T-cell (primary cell): ENCODE measurements at regions of chr10 and their contacts with region 1.

Region 1: GRCh38 chr10:100433253-100434240 is 29.3 kb upstream of the WNT8B start:
- DNase-seq: peak; percentile 75 to 98 (median 92)
- ATAC-seq: peak; percentile 96 to 99 (median 97)
- H3K4me3 ChIP-seq: no peak overlapping the region
- H3K4me3 Mint-ChIP-seq: no peak overlapping the region
- H3K27ac ChIP-seq: no peak overlapping the region
- H3K27ac Mint-ChIP-seq: no peak overlapping the region
- H3K4me1 ChIP-seq: no peaks in the 10 kb centered on the region
- H3K4me1 Mint-ChIP-seq: no peaks in the 10 kb centered on the region
- H3K27me3 ChIP-seq: no peaks in the 10 kb centered on the region
- H3K27me3 Mint-ChIP-seq: peaks cover 0 to 4% of the 10 kb centered on the region in 2 donors

Region 2: DNA sequence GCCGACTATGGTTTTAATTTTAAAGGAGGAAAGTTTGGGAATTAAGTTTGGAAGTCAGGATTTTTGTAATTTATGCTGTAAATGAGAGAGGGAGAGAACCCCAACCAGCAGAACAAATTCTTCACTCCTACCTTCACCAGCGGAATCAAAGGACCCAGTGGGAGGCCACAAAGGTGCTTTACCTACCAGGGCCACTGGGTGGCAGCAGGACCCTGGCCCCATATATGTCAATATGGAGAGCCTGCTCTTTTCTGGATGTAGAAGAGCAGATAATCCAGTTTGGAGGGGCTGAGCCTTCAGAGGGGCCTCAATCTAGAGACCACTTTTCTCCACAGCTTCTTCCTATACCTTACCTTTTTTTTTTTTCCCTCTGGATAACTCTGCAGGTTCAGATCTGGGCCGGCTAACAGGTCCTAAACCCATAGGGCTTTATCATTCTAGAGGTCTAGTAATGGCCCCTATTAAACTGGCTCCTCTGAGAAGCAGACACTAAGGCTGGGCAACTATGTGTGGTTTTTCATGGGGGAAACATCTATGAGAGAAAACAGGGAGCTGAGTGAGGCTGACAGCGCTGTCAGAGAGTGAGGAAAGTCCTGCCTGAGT is 95.0 kb before region 1 on chr10:
- CTCF ChIA-PET with region 1: interaction called, 9 to 10 read pairs
- POLR2A ChIA-PET with region 1: no interaction called
- DNase-seq: peak; percentile 53 to 87 (median 73)
- ATAC-seq: peak; percentile 81 to 90 (median 86)
- H3K4me3 ChIP-seq: no peak overlapping the region
- H3K4me3 Mint-ChIP-seq: no peak overlapping the region
- H3K27ac ChIP-seq: no peak overlapping the region
- H3K27ac Mint-ChIP-seq: no peak overlapping the region
- H3K4me1 ChIP-seq: no peaks in the 10 kb centered on the region
- H3K4me1 Mint-ChIP-seq: peaks cover 0 to 4% (median 4%) of the 10 kb centered on the region in 3 donors
- H3K27me3 ChIP-seq: peaks cover 0 to 4% of the 10 kb centered on the region in 2 experiments
- H3K27me3 Mint-ChIP-seq: peaks cover 3 to 7% of the 10 kb centered on the region in 2 donors

Region 3: GRCh38 chr10:100353770-100354485 is 79.6 kb before region 1 on chr10:
- CTCF ChIA-PET with region 1: interaction called in 1 of 2 experiments, 8 read pairs
- POLR2A ChIA-PET with region 1: interaction called in 1 of 2 experiments, 10 read pairs
- DNase-seq: no peak
- ATAC-seq: no peak
- H3K4me3 ChIP-seq: no peak overlapping the region
- H3K4me3 Mint-ChIP-seq: no peak overlapping the region
- H3K27ac ChIP-seq: no peak overlapping the region
- H3K27ac Mint-ChIP-seq: no peak overlapping the region
- H3K4me1 ChIP-seq: peaks cover 1 to 4% of the 10 kb centered on the region in 2 experiments
- H3K4me1 Mint-ChIP-seq: peaks cover 3 to 10% (median 3%) of the 10 kb centered on the region in 3 donors
- H3K27me3 ChIP-seq: no peaks in the 10 kb centered on the region
- H3K27me3 Mint-ChIP-seq: no peaks in the 10 kb centered on the region

Region 4: DNA sequence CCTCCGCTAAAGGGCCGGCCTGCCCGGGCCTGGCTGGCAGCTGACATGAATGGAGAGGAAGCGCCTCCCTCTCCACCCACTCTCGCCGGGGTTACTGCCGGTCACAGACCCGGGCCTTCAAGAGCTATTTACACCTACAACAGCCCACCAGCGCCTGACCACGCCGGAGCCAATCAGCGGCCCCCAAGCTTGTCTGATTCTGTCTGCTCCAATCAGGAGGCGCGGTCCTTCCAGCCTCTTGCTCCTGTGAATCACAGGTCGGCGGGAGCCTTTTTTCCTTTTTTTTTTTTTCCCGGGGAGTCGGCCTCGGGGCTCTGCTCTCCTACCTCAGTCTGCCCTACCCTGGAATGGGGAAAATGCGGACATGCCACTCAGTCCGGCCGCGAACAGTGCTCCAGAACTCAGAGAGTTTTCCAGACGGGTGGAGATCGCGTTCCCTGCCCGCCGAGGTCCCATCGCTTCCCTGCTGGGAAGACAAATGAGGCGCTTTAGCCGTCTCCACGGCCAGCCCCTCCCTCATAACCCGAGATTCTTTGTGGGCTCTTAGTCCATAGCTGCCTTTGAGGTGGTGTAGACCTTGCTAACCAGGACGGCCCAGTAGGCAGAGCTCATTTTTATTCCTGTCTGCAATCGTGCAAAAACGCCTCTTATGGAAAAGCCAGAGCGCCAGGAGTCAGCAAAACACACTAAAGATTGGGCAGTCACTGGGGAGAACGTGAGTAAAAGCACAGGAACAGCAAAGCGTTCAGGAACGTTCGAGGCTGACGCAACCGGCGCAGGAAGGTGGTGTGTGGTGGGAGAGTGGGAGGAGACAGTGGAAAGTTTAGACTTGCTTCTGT is 60.0 kb before region 1 on chr10:
- CTCF ChIA-PET with region 1: interaction called in 1 of 2 experiments, 10 read pairs
- POLR2A ChIA-PET with region 1: no interaction called
- DNase-seq: peak; percentile 54 to 91 (median 78)
- ATAC-seq: peak; percentile 81 to 86 (median 84)
- H3K4me3 ChIP-seq: peak overlapping the region; percentile 67 to 80
- H3K4me3 Mint-ChIP-seq: no peak overlapping the region
- H3K27ac ChIP-seq: peak overlapping the region; percentile 92
- H3K27ac Mint-ChIP-seq: no peak overlapping the region
- H3K4me1 ChIP-seq: peaks cover 34 to 52% of the 10 kb centered on the region in 2 experiments
- H3K4me1 Mint-ChIP-seq: peaks cover 19 to 21% (median 20%) of the 10 kb centered on the region in 3 donors
- H3K27me3 ChIP-seq: no peaks in the 10 kb centered on the region
- H3K27me3 Mint-ChIP-seq: no peaks in the 10 kb centered on the region

Region 5: GRCh38 chr10:101080933-101081931 is 647.7 kb after region 1 on chr10:
- CTCF ChIA-PET with region 1: no interaction called
- POLR2A ChIA-PET with region 1: no interaction called
- DNase-seq: peak in 1 of 35 experiments; percentile 30
- ATAC-seq: no peak
- H3K4me3 ChIP-seq: no peak overlapping the region
- H3K4me3 Mint-ChIP-seq: no peak overlapping the region
- H3K27ac ChIP-seq: no peak overlapping the region
- H3K27ac Mint-ChIP-seq: no peak overlapping the region
- H3K4me1 ChIP-seq: no peaks in the 10 kb centered on the region
- H3K4me1 Mint-ChIP-seq: no peaks in the 10 kb centered on the region
- H3K27me3 ChIP-seq: peaks cover 11 to 48% of the 10 kb centered on the region in 2 experiments
- H3K27me3 Mint-ChIP-seq: peaks cover 52 to 65% of the 10 kb centered on the region in 2 donors

Region 6: DNA sequence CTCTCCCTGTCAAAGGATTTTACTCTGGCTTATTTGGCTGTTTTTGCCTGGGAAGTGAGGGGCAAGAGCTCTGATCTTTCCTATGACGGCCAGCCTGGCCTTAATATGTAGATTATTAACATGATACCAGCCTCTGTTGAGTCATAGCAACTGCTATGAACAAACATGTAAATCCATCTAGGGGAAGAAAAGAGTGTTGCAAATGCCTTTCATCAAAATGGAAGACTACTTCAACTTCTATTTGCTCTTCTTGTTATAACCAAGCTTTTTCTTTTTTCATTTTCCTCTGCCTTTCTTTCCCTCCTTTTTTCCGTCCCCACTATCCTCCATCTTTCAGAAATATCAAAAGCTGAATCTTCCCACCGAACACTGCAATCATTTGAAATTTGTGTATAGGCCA is 967.0 kb after region 1 on chr10:
- CTCF ChIA-PET with region 1: no interaction called
- POLR2A ChIA-PET with region 1: no interaction called
- DNase-seq: no peak
- ATAC-seq: no peak
- H3K4me3 ChIP-seq: no peak overlapping the region
- H3K4me3 Mint-ChIP-seq: no peak overlapping the region
- H3K27ac ChIP-seq: no peak overlapping the region
- H3K27ac Mint-ChIP-seq: no peak overlapping the region
- H3K4me1 ChIP-seq: peaks cover 3 to 4% of the 10 kb centered on the region in 2 experiments
- H3K4me1 Mint-ChIP-seq: peaks cover 26 to 39% (median 26%) of the 10 kb centered on the region in 3 donors
- H3K27me3 ChIP-seq: no peaks in the 10 kb centered on the region
- H3K27me3 Mint-ChIP-seq: no peaks in the 10 kb centered on the region